Activated CD4-positive, alpha-beta memory T cell treated with anti-CD3 and anti-CD28 coated beads for 36 hours (primary cell): ENCODE measurements at regions of chr1 and their contacts with region 1.

Region 1: DNA sequence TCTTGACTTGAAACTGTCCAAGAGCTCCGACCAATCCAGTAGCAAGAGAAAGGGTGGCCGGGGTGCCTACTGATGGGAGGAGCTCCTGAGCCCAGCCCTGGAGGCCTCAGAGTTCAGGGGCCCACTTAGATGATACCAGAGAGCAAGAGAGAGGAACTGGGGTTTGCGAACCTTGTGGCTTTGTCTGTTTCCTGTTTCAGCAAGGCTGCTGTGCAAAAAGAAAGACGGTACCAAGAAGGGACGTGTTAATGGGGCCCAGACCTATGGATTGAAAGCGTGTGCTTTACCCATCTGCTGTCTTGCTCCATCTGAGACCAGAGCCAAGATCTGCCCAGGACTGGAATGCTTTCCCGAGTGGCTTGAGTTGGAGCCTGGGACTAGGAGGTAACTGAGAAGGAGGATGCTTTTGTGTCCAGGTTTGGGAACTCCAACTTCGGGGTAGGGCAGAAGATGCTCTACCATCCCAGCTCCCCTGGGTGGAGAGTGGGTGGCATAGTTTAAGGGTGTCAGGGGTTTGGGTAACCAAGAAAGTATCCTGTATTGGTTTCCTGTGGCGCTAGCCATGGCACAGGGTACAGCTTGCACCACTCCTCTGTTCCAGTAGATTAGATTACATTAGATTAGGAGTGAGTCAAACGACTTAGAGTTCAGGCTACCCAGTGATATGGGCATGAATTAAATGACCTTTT is at the start of gene TRAF3IP3:
- DNase-seq: peak; percentile 90
- H3K4me3 Mint-ChIP-seq: peak within 1 kb of the TSS; percentile 94
- H3K27ac Mint-ChIP-seq: peak within 1 kb of the TSS; percentile 99
- H3K4me1 Mint-ChIP-seq: peaks cover 77% of the 10 kb centered on the region
- H3K27me3 Mint-ChIP-seq: no peaks in the 10 kb centered on the region
- total RNA-seq, gene TRAF3IP3: 212 to 217 TPM

Region 2: GRCh38 chr1:209674957-209675564 is 81.0 kb before region 1 on chr1 and contains the start of gene G0S2:
- CTCF ChIA-PET with region 1: no interaction called
- POLR2A ChIA-PET with region 1: interaction called, 10 read pairs
- intact Hi-C with region 1: no loop called
- DNase-seq: peak; percentile 66
- H3K4me3 Mint-ChIP-seq: peak within 1 kb of the TSS; percentile 76
- H3K27ac Mint-ChIP-seq: peak within 1 kb of the TSS; percentile 68
- H3K4me1 Mint-ChIP-seq: peaks cover 68% of the 10 kb centered on the region
- H3K27me3 Mint-ChIP-seq: peaks cover 22% of the 10 kb centered on the region
- total RNA-seq, gene G0S2: 92.7 to 93.1 TPM

Region 3: GRCh38 chr1:209733409-209734192 is 22.5 kb before region 1 on chr1:
- CTCF ChIA-PET with region 1: interaction called, 62 read pairs
- POLR2A ChIA-PET with region 1: interaction called, 20 read pairs
- intact Hi-C with region 1: no loop called
- DNase-seq: no peak
- H3K4me3 Mint-ChIP-seq: peak overlapping the region; percentile 54
- H3K27ac Mint-ChIP-seq: peak overlapping the region; percentile 75
- H3K4me1 Mint-ChIP-seq: peaks cover 49% of the 10 kb centered on the region
- H3K27me3 Mint-ChIP-seq: no peaks in the 10 kb centered on the region

Region 4: GRCh38 chr1:209774592-209774991 is 18.5 kb after region 1 on chr1:
- CTCF ChIA-PET with region 1: interaction called, 98 read pairs
- POLR2A ChIA-PET with region 1: interaction called, 184 read pairs
- intact Hi-C with region 1: no loop called
- DNase-seq: no peak
- H3K4me3 Mint-ChIP-seq: no peak overlapping the region
- H3K27ac Mint-ChIP-seq: peak overlapping the region; percentile 81
- H3K4me1 Mint-ChIP-seq: peaks cover 35% of the 10 kb centered on the region
- H3K27me3 Mint-ChIP-seq: no peaks in the 10 kb centered on the region

Region 5: GRCh38 chr1:209784265-209785169 is 28.4 kb after region 1 on chr1 and contains the start of gene C1orf74:
- CTCF ChIA-PET with region 1: interaction called, 5 read pairs
- POLR2A ChIA-PET with region 1: interaction called, 10 read pairs
- intact Hi-C with region 1: loop called (anchors 1 kb)
- DNase-seq: peak; percentile 100
- H3K4me3 Mint-ChIP-seq: peak within 1 kb of the TSS; percentile 93
- H3K27ac Mint-ChIP-seq: peak within 1 kb of the TSS; percentile 93
- H3K4me1 Mint-ChIP-seq: peaks cover 39% of the 10 kb centered on the region
- H3K27me3 Mint-ChIP-seq: peaks cover 3% of the 10 kb centered on the region
- total RNA-seq, gene C1orf74: 3.5 to 3.9 TPM

Region 6: GRCh38 chr1:210342986-210343780 is 587.1 kb after region 1 on chr1:
- CTCF ChIA-PET with region 1: no interaction called
- POLR2A ChIA-PET with region 1: no interaction called
- intact Hi-C with region 1: loop called (anchors 2 kb)
- DNase-seq: no peak
- H3K4me3 Mint-ChIP-seq: no peak overlapping the region
- H3K27ac Mint-ChIP-seq: no peak overlapping the region
- H3K4me1 Mint-ChIP-seq: peaks cover 36% of the 10 kb centered on the region
- H3K27me3 Mint-ChIP-seq: no peaks in the 10 kb centered on the region